CD4-positive, alpha-beta memory T cell (primary cell): ENCODE measurements at regions of chr17 and their contacts with region 1.

Region 1: GRCh38 chr17:16521070-16521727 is 29.2 kb upstream of the LRRC75A start:
- DNase-seq: peak; percentile 64 to 71 (median 68)
- H3K4me3 ChIP-seq: no peak overlapping the region
- H3K4me3 Mint-ChIP-seq: no peak overlapping the region
- H3K27ac ChIP-seq: no peak overlapping the region
- H3K27ac Mint-ChIP-seq: peak overlapping the region in 2 of 7 donors; percentile 48 to 63
- H3K4me1 ChIP-seq: peaks cover 3% of the 10 kb centered on the region
- H3K4me1 Mint-ChIP-seq: peaks cover 0 to 5% (median 2%) of the 10 kb centered on the region in 4 donors
- H3K27me3 ChIP-seq: no peaks in the 10 kb centered on the region
- H3K27me3 Mint-ChIP-seq: peaks cover 20 to 21% of the 10 kb centered on the region in 2 donors

Region 2: GRCh38 chr17:16304830-16305229 is 216.4 kb before region 1 on chr17:
- CTCF ChIA-PET with region 1: no interaction called
- POLR2A ChIA-PET with region 1: no interaction called
- intact Hi-C with region 1: no loop called
- DNase-seq: peak in 1 of 5 donors; percentile 17
- H3K4me3 ChIP-seq: no peak overlapping the region
- H3K4me3 Mint-ChIP-seq: no peak overlapping the region
- H3K27ac ChIP-seq: no peak overlapping the region
- H3K27ac Mint-ChIP-seq: peak overlapping the region in 1 of 7 donors; percentile 24
- H3K4me1 ChIP-seq: no peaks in the 10 kb centered on the region
- H3K4me1 Mint-ChIP-seq: peaks cover 0 to 3% (median 2%) of the 10 kb centered on the region in 4 donors
- H3K27me3 ChIP-seq: no peaks in the 10 kb centered on the region
- H3K27me3 Mint-ChIP-seq: no peaks in the 10 kb centered on the region

Region 3: DNA sequence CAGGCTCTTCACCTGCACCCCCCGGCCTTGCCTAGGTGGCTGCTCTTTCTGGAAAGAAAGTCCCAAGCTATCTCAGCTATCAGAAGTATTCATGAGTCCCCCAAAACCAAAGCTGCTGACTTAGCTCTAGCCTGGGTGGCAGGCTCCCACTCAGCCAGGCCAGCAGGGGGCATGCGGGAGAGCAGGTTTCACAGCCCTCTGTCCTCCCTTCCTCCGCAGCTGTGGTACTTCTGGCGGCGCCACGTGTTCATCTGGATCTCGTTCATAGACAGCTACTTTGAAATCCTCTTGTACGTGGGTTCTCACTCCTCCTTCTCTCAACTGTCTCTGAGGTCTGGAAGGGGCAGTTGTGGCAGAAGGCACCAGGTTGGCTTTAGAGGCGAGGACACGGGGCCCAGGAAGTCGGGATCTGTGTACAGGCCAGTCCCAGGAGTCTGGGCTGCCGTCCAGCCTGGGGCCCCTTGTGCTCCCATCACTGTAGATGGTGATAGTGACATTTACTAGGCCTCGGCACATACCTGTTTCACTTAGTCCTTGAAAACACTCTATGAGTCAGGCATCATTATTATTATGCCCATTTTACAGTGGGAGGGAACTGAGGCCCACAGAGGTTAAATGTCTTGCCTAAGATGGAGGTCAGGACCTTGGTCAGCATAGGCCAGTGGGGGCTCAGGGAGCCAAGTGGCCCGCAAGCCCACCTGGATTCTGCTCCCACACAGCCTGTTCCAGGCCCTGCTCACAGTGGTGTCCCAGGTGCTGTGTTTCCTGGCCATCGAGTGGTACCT is 92.9 kb before region 1 on chr17:
- CTCF ChIA-PET with region 1: interaction called, 15 read pairs
- POLR2A ChIA-PET with region 1: interaction called, 3 read pairs
- intact Hi-C with region 1: no loop called
- DNase-seq: peak in 3 of 5 donors; percentile 15 to 38 (median 24)
- H3K4me3 ChIP-seq: no peak overlapping the region
- H3K4me3 Mint-ChIP-seq: no peak overlapping the region
- H3K27ac ChIP-seq: no peak overlapping the region
- H3K27ac Mint-ChIP-seq: peak overlapping the region in 2 of 7 donors; percentile 15 to 29
- H3K4me1 ChIP-seq: no peaks in the 10 kb centered on the region
- H3K4me1 Mint-ChIP-seq: peaks cover 0 to 7% (median 3%) of the 10 kb centered on the region in 4 donors
- H3K27me3 ChIP-seq: no peaks in the 10 kb centered on the region
- H3K27me3 Mint-ChIP-seq: no peaks in the 10 kb centered on the region

Region 4: DNA sequence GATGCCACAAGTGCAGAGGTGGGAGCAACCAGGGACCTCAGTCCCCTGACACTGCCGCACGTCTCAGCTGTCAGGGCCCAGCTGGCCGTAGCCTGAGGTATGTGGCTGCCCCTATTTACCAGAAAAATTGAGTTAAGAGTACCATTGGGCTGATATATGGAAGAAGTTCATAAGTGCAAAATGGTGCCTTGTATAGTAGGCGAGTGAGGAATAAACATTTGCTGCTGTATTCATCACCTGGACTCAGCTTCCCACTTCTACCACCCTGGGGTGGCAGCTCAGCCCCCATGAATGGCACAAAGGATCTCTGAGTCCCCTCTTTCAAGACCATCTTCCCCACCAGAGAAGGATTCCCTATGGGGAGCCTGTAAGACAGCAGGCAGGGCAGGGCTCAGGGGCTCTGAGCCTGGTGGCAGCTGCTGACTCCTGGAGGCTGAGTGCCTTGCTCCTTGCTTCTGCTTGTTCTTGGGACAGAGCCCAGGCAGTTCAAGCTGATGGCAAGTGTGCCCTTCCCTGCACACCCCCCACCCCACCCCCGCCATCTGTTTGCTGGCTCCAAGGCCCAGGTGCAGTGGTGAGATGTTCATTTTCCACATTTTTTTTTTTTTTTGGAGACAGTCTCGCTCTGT is 76.8 kb before region 1 on chr17:
- CTCF ChIA-PET with region 1: interaction called, 144 read pairs
- POLR2A ChIA-PET with region 1: no interaction called
- intact Hi-C with region 1: no loop called
- DNase-seq: peak in 1 of 5 donors; percentile 33
- H3K4me3 ChIP-seq: no peak overlapping the region
- H3K4me3 Mint-ChIP-seq: no peak overlapping the region
- H3K27ac ChIP-seq: no peak overlapping the region
- H3K27ac Mint-ChIP-seq: peak overlapping the region in 5 of 7 donors; percentile 7 to 72 (median 50)
- H3K4me1 ChIP-seq: peaks cover 38% of the 10 kb centered on the region
- H3K4me1 Mint-ChIP-seq: peaks cover 28 to 59% (median 40%) of the 10 kb centered on the region in 4 donors
- H3K27me3 ChIP-seq: no peaks in the 10 kb centered on the region
- H3K27me3 Mint-ChIP-seq: no peaks in the 10 kb centered on the region

Region 5: GRCh38 chr17:16470265-16470664 is 50.9 kb before region 1 on chr17:
- CTCF ChIA-PET with region 1: no interaction called
- POLR2A ChIA-PET with region 1: no interaction called
- intact Hi-C with region 1: no loop called
- DNase-seq: no peak
- H3K4me3 ChIP-seq: no peak overlapping the region
- H3K4me3 Mint-ChIP-seq: no peak overlapping the region
- H3K27ac ChIP-seq: no peak overlapping the region
- H3K27ac Mint-ChIP-seq: no peak overlapping the region
- H3K4me1 ChIP-seq: no peaks in the 10 kb centered on the region
- H3K4me1 Mint-ChIP-seq: peaks cover 0 to 2% (median under 1%) of the 10 kb centered on the region in 4 donors
- H3K27me3 ChIP-seq: no peaks in the 10 kb centered on the region
- H3K27me3 Mint-ChIP-seq: no peaks in the 10 kb centered on the region

Region 6: DNA sequence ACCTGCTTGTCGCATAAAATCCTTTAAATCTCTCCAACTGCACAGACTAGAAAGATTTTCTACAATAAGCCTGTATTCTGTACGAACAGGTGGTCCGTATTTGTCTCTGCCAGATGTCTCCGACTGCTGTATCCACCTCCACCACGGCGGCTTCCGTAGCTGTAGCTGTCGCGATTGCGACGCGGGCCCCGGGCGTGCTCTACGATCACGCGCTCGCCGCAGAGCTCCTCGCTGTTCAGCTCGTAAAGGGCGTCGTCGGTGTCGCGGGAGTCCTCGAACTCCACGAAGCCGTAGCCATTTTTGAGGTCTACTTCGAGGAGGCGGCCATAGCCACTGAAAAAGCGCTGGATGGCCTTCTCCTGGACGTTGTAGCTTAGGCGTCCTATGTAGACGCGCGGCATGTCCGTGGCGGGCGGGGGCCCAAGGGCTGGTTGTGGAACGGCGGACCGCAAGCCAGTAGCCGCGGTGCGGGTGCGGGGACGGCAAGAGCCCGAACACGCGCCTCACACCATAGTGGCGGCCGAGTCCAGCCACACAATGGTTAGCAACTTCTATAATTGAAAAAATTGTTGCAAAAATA is 96.4 kb after region 1 on chr17:
- CTCF ChIA-PET with region 1: no interaction called
- POLR2A ChIA-PET with region 1: no interaction called
- intact Hi-C with region 1: no loop called
- DNase-seq: no peak
- H3K4me3 ChIP-seq: no peak overlapping the region
- H3K4me3 Mint-ChIP-seq: no peak overlapping the region
- H3K27ac ChIP-seq: no peak overlapping the region
- H3K27ac Mint-ChIP-seq: no peak overlapping the region
- H3K4me1 ChIP-seq: no peaks in the 10 kb centered on the region
- H3K4me1 Mint-ChIP-seq: no peaks in the 10 kb centered on the region
- H3K27me3 ChIP-seq: no peaks in the 10 kb centered on the region
- H3K27me3 Mint-ChIP-seq: no peaks in the 10 kb centered on the region